Activated CD4-positive, alpha-beta memory T cell treated with anti-CD3 and anti-CD28 coated beads for 36 hours (primary cell): ENCODE measurements at regions of chrX and their contacts with region 1.

Region 1: DNA sequence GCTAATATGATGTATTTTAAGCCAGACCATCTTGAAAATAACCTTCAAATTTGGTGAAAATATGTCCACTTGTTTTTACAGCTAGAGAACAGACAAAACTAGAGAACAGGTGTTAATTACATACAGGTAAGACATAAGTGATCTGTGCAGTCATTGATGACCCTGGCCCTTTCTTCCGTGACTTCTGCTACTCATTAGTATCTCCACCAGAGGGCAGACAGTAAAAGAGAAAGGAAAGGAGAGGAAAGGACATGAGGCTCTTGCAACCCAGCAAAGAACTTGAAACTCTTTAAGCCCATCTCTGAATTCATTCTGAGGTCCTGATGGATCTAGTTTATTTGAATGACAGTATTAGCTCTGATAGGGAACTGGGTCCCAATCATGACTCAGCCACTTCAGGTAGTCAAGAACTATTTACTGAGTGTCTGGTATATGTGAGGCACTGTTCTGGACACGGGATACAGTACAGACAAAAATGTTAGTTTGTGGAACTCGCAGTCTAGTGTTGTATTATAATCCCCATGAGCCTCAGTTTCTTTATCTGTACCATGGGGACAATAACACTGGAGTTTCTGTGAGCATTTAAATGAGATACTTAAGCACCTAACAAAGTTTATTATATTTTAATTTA is 121.0 kb upstream of the TEX13D start:
- DNase-seq: peak; percentile 15
- H3K4me3 Mint-ChIP-seq: no peak overlapping the region
- H3K27ac Mint-ChIP-seq: no peak overlapping the region
- H3K4me1 Mint-ChIP-seq: peaks cover 33% of the 10 kb centered on the region
- H3K27me3 Mint-ChIP-seq: no peaks in the 10 kb centered on the region

Region 2: GRCh38 chrX:123833387-123833786 is 378.0 kb before region 1 on chrX:
- CTCF ChIA-PET with region 1: no interaction called
- POLR2A ChIA-PET with region 1: no interaction called
- intact Hi-C with region 1: loop called (anchors 5 kb)
- DNase-seq: peak; percentile 73
- H3K4me3 Mint-ChIP-seq: no peak overlapping the region
- H3K27ac Mint-ChIP-seq: no peak overlapping the region
- H3K4me1 Mint-ChIP-seq: peaks cover 12% of the 10 kb centered on the region
- H3K27me3 Mint-ChIP-seq: peaks cover 3% of the 10 kb centered on the region

Region 3: DNA sequence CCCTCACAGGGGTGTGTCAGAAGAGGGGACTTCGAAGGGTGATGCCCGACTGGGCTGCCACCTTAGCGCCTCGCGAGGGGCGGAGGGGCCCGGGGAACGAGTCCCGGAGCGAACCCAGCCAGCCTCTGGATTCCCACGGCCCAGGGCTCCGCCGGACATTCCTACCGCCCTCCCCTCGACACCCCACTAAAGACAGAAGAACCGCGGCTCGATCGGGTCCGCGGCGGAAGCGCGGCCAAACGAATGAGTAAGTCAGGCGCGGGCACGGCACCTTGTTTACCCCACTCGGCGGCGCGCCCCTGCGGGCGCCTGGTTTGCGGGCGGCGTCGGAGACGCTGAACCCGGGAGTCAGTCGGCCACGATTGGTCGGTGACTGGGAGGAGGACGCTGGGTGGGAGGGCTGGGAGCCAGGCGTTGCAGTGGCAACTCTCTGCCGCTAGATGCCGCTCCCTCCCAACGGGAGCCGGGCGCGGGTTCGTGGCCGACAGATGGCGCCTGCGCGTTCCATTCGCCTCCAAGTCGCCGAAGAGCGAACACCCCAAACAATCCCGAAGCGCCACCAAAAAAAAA is 251.3 kb before region 1 on chrX:
- CTCF ChIA-PET with region 1: no interaction called
- POLR2A ChIA-PET with region 1: no interaction called
- intact Hi-C with region 1: loop called (anchors 2 kb)
- DNase-seq: peak; percentile 94
- H3K4me3 Mint-ChIP-seq: peak overlapping the region; percentile 92
- H3K27ac Mint-ChIP-seq: peak overlapping the region; percentile 99
- H3K4me1 Mint-ChIP-seq: peaks cover 17% of the 10 kb centered on the region
- H3K27me3 Mint-ChIP-seq: no peaks in the 10 kb centered on the region

Region 4: DNA sequence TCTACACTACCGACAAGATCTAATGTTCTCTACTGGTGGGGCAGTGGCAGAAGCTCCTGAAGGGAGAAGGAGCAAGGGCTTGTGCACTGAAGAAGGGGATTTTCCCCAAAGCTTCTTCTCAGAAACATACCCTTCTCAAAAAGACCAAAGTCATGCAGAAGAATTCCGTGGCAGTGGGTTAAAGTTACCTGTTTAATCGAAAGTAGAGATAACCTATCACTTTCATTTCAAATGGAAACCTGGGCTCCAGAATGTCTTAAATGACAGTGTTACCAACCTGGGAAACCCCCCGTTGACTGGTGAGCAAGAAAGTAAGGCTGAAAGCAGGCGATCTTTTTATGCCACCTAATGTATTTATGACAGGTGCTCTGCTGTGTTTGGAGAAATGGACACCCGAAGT is 28.5 kb after region 1 on chrX:
- CTCF ChIA-PET with region 1: interaction called, 7 read pairs
- POLR2A ChIA-PET with region 1: no interaction called
- intact Hi-C with region 1: loop called (anchors 1 kb)
- DNase-seq: peak; percentile 61
- H3K4me3 Mint-ChIP-seq: peak overlapping the region; percentile 46
- H3K27ac Mint-ChIP-seq: peak overlapping the region; percentile 70
- H3K4me1 Mint-ChIP-seq: peaks cover 44% of the 10 kb centered on the region
- H3K27me3 Mint-ChIP-seq: no peaks in the 10 kb centered on the region

Region 5: DNA sequence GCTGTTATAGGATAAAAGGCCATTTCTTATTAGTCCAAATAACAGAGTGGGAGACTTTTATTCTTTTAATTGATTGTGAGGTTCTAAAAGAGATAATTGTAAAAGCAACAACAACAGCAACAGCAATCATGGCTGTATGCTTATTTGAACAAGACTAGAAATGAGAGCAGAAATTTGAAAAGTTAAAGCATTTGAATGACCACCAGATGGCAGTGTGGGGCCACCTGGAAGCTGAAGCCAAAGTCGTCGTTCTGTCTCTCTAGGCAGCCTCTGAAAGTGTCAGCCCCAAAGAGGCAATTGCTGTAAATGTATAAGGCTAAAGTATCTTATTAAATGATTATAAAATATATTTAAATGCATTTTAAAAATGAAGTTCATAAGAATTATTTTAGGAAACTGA is 177.1 kb after region 1 on chrX:
- CTCF ChIA-PET with region 1: no interaction called
- POLR2A ChIA-PET with region 1: no interaction called
- intact Hi-C with region 1: loop called (anchors 2 kb)
- DNase-seq: peak; percentile 61
- H3K4me3 Mint-ChIP-seq: no peak overlapping the region
- H3K27ac Mint-ChIP-seq: no peak overlapping the region
- H3K4me1 Mint-ChIP-seq: peaks cover 15% of the 10 kb centered on the region
- H3K27me3 Mint-ChIP-seq: no peaks in the 10 kb centered on the region

Region 6: GRCh38 chrX:125004799-125005198 is 793.4 kb after region 1 on chrX:
- CTCF ChIA-PET with region 1: no interaction called
- POLR2A ChIA-PET with region 1: no interaction called
- intact Hi-C with region 1: loop called (anchors 10 kb)
- DNase-seq: no peak
- H3K4me3 Mint-ChIP-seq: no peak overlapping the region
- H3K27ac Mint-ChIP-seq: no peak overlapping the region
- H3K4me1 Mint-ChIP-seq: peaks cover 5% of the 10 kb centered on the region
- H3K27me3 Mint-ChIP-seq: no peaks in the 10 kb centered on the region